ENCODE measurements at regions of chr5 and their contacts with region 1.

Region 1: DNA sequence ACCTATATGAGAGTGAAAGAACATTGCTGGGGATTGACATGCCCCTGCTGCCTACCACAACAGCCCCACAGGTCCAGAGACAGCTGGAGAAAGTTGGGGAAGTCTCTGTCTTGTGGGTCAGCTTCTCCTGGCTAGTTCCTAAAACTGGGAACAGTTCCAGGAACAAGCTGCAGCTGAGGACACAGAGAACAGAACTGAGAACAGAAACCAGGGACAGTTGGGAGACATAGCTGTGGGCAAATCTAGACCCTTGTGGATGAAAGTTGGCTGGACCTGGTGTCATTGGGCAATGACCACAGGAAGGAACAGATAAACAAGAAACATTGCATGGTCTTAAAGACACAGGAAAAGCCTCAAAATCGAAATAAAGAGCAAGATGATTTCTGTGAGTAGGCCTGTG is 58.3 kb upstream of the MOCS2 start:
- DNase-seq: peak; percentile 58
- H3K4me3 ChIP-seq: no peak overlapping the region
- H3K27ac ChIP-seq: peak overlapping the region; percentile 75
- H3K4me1 ChIP-seq: peaks cover 48% of the 10 kb centered on the region
- H3K27me3 ChIP-seq: no peaks in the 10 kb centered on the region
- CTCF ChIP-seq: no peak

Region 2: GRCh38 chr5:52915176-52915875 is 252.5 kb before region 1 on chr5:
- intact Hi-C with region 1: no loop called
- DNase-seq: no peak
- H3K4me3 ChIP-seq: peak overlapping the region; percentile 44
- H3K27ac ChIP-seq: peak overlapping the region; percentile 46
- H3K4me1 ChIP-seq: peaks cover 19% of the 10 kb centered on the region
- H3K27me3 ChIP-seq: no peaks in the 10 kb centered on the region
- CTCF ChIP-seq: peak; percentile 84

Region 3: DNA sequence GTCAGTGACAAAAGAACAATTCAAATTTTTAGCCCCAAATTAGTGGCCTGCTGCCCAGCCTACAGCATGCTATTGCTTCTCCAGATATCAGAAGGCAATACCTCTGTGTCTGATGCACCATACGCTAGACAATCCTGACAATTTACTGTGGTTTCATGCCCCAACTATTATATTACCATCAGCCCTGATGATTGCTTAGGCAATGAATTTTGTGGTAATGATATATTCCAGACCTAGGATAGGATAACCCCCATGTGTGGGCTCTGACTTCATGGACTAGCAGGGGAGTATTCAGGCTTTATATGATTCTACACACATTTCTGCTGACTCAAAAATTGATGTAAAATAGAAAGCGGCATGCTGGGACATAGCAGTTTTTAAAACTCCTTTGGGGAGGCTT is 143.8 kb after region 1 on chr5:
- intact Hi-C with region 1: no loop called
- DNase-seq: no peak
- H3K4me3 ChIP-seq: no peak overlapping the region
- H3K27ac ChIP-seq: no peak overlapping the region
- H3K4me1 ChIP-seq: no peaks in the 10 kb centered on the region
- H3K27me3 ChIP-seq: no peaks in the 10 kb centered on the region
- CTCF ChIP-seq: no peak

Region 4: GRCh38 chr5:54229041-54229780 is 1061.4 kb after region 1 on chr5:
- intact Hi-C with region 1: loop called (anchors 10 kb)
- DNase-seq: peak; percentile 73
- H3K4me3 ChIP-seq: no peak overlapping the region
- H3K27ac ChIP-seq: no peak overlapping the region
- H3K4me1 ChIP-seq: peaks cover 46% of the 10 kb centered on the region
- H3K27me3 ChIP-seq: no peaks in the 10 kb centered on the region
- CTCF ChIP-seq: peak; percentile 96